Esophagus squamous epithelium (tissue), 5 donors: ENCODE measurements at regions of chr2 and their contacts with region 1.

Region 1: DNA sequence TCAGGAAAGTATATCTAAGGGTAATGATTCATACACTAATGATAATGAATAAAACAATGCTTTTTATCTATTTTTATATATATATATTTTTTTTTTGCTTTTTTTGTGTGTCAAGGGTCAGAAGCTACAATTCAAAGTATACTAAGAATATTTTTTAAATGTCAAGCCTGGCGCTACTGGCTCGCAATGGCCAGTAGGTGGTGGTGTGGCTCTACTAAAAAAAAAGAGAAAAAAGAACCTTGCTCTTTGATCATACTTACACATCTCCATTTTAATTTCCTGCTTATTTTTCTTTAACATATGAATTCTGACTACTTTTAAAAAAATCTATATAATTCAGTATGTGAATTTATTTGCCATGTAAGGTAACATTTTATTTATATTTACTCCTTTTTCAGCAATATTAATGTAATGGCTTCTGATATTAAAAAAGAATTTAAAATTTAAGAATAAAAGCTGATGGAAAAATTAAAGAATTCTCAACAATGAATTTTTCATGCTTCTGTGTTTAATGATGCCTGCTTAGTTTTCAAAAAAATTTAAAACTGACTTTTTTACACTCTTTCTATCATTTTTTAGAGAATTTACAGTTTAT is 232.9 kb downstream of the GULP1 start:
- DNase-seq: no peak
- H3K4me3 ChIP-seq: no peak overlapping the region
- H3K27ac ChIP-seq: no peak overlapping the region
- H3K4me1 ChIP-seq: peaks cover 0 to 18% (median 0%) of the 10 kb centered on the region in 3 donors
- H3K27me3 ChIP-seq: no peaks in the 10 kb centered on the region
- CTCF ChIP-seq: peak in 5 of 6 experiments; percentile 47 to 75 (median 73)
- POLR2A ChIP-seq: no peak

Region 2: GRCh38 chr2:188978291-188979081 is 453.9 kb after region 1 on chr2:
- intact Hi-C with region 1: loop called (anchors 10 kb)
- DNase-seq: no peak
- H3K4me3 ChIP-seq: peak overlapping the region in 3 of 4 donors; percentile 13 to 58 (median 44)
- H3K27ac ChIP-seq: peak overlapping the region; percentile 12 to 82 (median 72)
- H3K4me1 ChIP-seq: no peaks in the 10 kb centered on the region
- H3K27me3 ChIP-seq: no peaks in the 10 kb centered on the region
- CTCF ChIP-seq: peak in 1 of 6 experiments; percentile 16
- POLR2A ChIP-seq: no peak